ENCODE measurements at regions of chr9 and their contacts with region 1.

Region 1: GRCh38 chr9:126500684-126501382 is 112.9 kb upstream of the LMX1B start:
- DNase-seq: peak; percentile 92
- ATAC-seq: peak; percentile 78
- H3K4me3 Mint-ChIP-seq: peak overlapping the region; percentile 77
- H3K27ac Mint-ChIP-seq: no peak overlapping the region
- H3K4me1 Mint-ChIP-seq: peaks cover 13% of the 10 kb centered on the region
- H3K27me3 Mint-ChIP-seq: peaks cover 12% of the 10 kb centered on the region
- CTCF ChIP-seq: peak; percentile 97

Region 2: DNA sequence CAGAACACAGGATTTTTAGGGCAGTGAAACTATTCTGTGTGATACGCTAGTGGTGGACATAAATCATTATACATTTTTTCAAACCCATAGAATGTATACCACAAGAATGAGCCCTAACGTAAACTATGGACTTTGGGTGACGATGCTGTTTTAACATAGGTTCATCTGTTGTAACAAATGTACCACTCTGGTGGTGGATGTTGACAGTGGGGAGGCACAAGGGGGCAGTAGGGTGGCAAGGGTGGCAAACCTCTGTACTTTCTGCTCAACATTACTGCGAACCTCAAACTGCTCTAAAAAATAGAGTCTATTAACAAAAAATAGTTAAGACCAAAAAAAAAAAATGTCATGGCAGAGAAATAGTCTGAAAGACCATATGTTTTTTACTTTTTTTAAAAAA is 183.3 kb before region 1 on chr9:
- CTCF ChIA-PET with region 1: no interaction called
- POLR2A ChIA-PET with region 1: no interaction called
- DNase-seq: no peak
- ATAC-seq: no peak
- H3K4me3 Mint-ChIP-seq: no peak overlapping the region
- H3K27ac Mint-ChIP-seq: no peak overlapping the region
- H3K4me1 Mint-ChIP-seq: no peaks in the 10 kb centered on the region; the same call in 1 of the 2 replicates
- H3K27me3 Mint-ChIP-seq: peaks cover 3% of the 10 kb centered on the region; the same call in 1 of the 2 replicates
- CTCF ChIP-seq: no peak

Region 3: GRCh38 chr9:126471084-126471624 is 29.7 kb before region 1 on chr9:
- CTCF ChIA-PET with region 1: interaction called, 22 read pairs
- POLR2A ChIA-PET with region 1: no interaction called
- DNase-seq: no peak
- ATAC-seq: 0 out of 2 replicates have a peak, but pooled peaks have one; percentile 21
- H3K4me3 Mint-ChIP-seq: no peak overlapping the region
- H3K27ac Mint-ChIP-seq: peak overlapping the region; percentile 58
- H3K4me1 Mint-ChIP-seq: peaks cover 30% of the 10 kb centered on the region
- H3K27me3 Mint-ChIP-seq: no peaks in the 10 kb centered on the region
- CTCF ChIP-seq: no peak

Region 4: DNA sequence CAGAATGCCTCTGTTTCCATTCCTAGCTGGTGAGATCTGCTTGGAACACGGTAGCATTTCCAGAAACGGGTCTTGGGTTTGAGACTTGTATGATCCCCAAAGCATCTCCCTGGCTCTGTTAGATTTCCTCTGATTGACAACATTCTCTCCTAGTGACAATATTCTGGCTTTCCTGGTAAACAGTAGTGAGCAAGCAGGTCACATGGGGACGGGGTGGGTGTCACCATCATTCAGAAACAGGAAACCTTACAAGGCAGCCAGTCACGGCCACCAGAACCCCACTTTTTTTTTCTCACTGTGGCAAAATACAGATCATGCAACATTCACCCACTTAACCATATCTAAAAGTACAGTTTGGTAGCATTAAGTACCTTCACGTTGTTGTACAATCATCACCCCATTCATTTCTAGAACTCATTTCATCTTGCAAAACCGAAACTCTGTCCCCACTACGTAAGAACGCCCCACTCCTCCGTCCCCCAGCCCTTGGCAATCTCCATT is 22.8 kb after region 1 on chr9:
- CTCF ChIA-PET with region 1: interaction called, 24 read pairs
- POLR2A ChIA-PET with region 1: interaction called, 6 read pairs
- DNase-seq: no peak
- ATAC-seq: no peak
- H3K4me3 Mint-ChIP-seq: no peak overlapping the region
- H3K27ac Mint-ChIP-seq: no peak overlapping the region
- H3K4me1 Mint-ChIP-seq: peaks cover 31% of the 10 kb centered on the region
- H3K27me3 Mint-ChIP-seq: no peaks in the 10 kb centered on the region
- CTCF ChIP-seq: no peak

Region 5: GRCh38 chr9:126558051-126558665 is 57.3 kb after region 1 on chr9:
- CTCF ChIA-PET with region 1: interaction called, 360 read pairs
- POLR2A ChIA-PET with region 1: interaction called, 3 read pairs
- DNase-seq: peak; percentile 85
- ATAC-seq: peak; percentile 86
- H3K4me3 Mint-ChIP-seq: no peak overlapping the region
- H3K27ac Mint-ChIP-seq: no peak overlapping the region
- H3K4me1 Mint-ChIP-seq: peaks cover 7% of the 10 kb centered on the region
- H3K27me3 Mint-ChIP-seq: peaks cover 3% of the 10 kb centered on the region; the same call in 1 of the 2 replicates
- CTCF ChIP-seq: peak; percentile 98

Region 6: DNA sequence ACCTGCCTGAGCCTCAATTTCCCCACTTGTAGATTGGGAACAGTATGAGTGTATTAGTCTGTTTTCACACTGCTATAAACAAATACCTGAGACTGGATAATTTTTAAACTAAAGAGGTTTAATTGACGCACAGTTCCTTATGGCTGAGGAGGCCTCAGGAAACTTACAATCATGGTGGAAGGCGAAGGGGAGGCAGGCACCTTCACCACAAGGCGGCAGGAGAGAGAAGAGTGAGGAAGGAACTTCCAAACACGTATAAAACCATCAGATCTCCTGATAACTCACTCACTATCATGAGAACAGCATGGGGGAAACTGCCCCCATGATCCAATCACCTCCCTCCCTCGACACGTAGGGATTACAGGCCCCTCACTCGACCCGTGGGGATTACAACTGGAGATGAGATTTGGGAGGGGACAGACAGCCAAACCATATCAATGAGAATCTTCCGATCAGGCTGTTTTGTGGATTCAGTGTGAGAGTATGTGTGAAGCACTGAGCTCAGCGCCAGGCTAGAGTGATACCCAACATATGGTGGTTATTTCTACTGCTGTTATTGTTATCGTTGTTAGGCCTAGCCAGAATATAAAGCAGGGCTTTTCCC is 98.3 kb after region 1 on chr9:
- CTCF ChIA-PET with region 1: interaction called, 17 read pairs
- POLR2A ChIA-PET with region 1: no interaction called
- DNase-seq: peak; percentile 53
- ATAC-seq: peak; percentile 67
- H3K4me3 Mint-ChIP-seq: no peak overlapping the region
- H3K27ac Mint-ChIP-seq: no peak overlapping the region
- H3K4me1 Mint-ChIP-seq: no peaks in the 10 kb centered on the region
- H3K27me3 Mint-ChIP-seq: no peaks in the 10 kb centered on the region
- CTCF ChIP-seq: 0 out of 2 replicates have a peak, but pooled peaks have one; percentile 17

Region 7: DNA sequence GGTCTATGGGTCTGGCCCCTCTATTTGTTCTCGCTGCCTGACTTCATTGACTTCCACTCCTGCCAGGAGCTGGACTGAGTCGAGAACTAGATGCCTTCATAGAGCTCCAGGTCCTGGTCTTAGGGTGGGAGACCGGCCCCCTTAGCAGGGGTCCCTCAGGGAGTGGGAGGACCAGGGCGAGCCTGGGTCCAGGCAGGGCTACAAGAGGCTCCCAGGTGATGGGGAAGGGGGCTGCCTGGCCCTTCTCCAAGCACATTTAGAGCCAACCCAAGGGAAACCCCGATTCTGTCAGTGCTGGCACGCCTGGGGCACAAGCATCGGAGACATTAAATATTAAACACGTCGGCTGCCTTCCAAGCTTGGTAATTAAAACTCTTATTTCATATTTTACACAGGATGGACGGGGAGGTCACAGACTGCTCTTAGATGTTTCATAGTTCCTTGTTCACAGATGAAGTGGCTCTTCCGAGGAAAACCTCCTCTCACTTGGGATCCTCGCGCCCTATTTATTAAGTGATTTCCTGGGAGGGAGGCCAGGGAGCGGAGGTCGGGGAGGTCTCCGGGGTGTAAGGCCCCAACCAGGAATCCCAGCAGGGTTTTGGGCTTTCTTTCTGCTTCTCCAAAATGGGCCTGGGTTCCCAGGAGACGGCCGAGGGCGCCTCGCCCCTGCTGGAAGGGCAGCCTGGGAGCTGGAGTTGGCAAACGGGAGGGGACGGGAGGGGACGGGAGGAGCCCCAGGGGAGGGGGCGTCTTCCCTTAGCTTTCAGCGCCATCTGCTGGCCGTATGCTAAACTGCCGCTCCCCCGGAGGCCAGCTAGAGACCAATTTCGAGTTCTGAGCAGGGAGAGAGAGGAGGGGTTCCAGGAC is 280.6 kb after region 1 on chr9:
- CTCF ChIA-PET with region 1: interaction called, 56 read pairs
- POLR2A ChIA-PET with region 1: no interaction called
- DNase-seq: peak; percentile 97
- ATAC-seq: peak; percentile 79
- H3K4me3 Mint-ChIP-seq: peak overlapping the region; percentile 27
- H3K27ac Mint-ChIP-seq: no peak overlapping the region
- H3K4me1 Mint-ChIP-seq: 0 out of 2 replicates have a peak, but pooled peaks cover 4% of the 10 kb centered on the region
- H3K27me3 Mint-ChIP-seq: peaks cover 9% of the 10 kb centered on the region; the same call in 1 of the 2 replicates
- CTCF ChIP-seq: peak; percentile 98

Measured in WTC11 (cell line).